ENCODE measurements at regions of chr1 and their contacts with region 1.

Region 1: GRCh38 chr1:28902738-28903137 is 11.6 kb upstream of the EPB41 start:
- DNase-seq: no peak
- H3K4me3 ChIP-seq: no peak overlapping the region
- H3K27ac ChIP-seq: no peak overlapping the region
- H3K4me1 ChIP-seq: peaks cover 13 to 17% of the 10 kb centered on the region in 2 experiments; a peak in 2 of 4 replicates
- H3K27me3 ChIP-seq: no peaks in the 10 kb centered on the region
- CTCF ChIP-seq: no peak
- EP300 ChIP-seq: no peak
- RAD21 ChIP-seq: no peak

Region 2: GRCh38 chr1:28914228-28915030 is 11.7 kb after region 1 on chr1 and contains the start of gene EPB41:
- CTCF ChIA-PET with region 1: interaction called, 6 read pairs
- POLR2A ChIA-PET with region 1: interaction called, 11 read pairs
- DNase-seq: peak; percentile 99
- H3K4me3 ChIP-seq: peak within 1 kb of the TSS; percentile 61 to 76
- H3K27ac ChIP-seq: peak within 1 kb of the TSS in 1 of 2 experiments; percentile 59; a peak in 2 of 4 replicates
- H3K4me1 ChIP-seq: peaks cover 0 to 15% of the 10 kb centered on the region in 2 experiments; a peak in 2 of 4 replicates
- H3K27me3 ChIP-seq: no peaks in the 10 kb centered on the region
- CTCF ChIP-seq: no peak
- EP300 ChIP-seq: no peak
- RAD21 ChIP-seq: no peak
- polyA plus RNA-seq, gene EPB41: 7.4 and 10.3 TPM in 2 replicates

Region 3: DNA sequence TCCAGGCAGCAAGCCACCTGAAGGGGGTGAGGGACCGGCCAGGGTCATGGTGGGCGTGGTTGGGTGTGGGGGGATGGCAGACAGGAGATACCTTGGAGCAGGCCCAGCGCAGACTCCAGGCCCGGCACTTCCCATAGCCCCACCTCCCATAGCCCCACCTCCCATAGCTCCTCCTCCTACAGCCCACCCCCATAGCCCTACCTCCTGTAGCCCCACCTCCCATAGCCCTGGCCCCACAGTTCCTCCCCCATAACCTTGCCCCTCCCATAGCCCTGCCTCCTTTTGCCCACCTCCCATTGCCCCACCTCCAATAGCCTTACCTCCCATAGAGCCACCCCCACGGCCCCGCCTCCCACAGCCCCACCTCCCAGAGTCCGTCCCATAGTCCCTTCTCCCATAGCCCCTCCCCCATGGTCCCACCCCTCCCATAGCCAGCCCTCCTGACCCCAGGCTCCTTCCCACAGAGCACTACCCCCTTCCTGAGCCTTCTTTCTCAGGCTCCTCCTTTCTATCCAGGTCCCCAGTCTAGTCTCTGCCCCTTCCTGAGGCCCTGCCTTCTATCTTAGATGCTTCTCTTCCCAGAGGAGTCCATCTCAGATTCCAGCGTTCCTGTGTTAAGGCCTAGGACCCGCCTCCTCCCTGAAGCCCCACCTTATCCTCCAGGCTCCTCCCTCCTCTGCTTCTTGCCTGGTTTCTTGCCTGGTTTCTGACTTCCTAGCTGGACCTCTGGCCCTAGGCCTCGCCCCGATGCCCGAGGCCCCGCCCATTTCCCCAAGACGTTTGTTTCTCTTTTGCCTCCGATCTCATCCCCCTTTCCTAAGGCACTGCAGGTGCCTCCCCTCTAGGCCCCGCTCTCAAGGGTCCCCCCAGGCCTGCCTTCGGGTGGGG is 380.4 kb after region 1 on chr1:
- CTCF ChIA-PET with region 1: no interaction called
- POLR2A ChIA-PET with region 1: no interaction called
- DNase-seq: peak; percentile 73
- H3K4me3 ChIP-seq: no peak overlapping the region
- H3K27ac ChIP-seq: no peak overlapping the region; a peak in 1 of 4 replicates
- H3K4me1 ChIP-seq: peaks cover 0 to 23% of the 10 kb centered on the region in 2 experiments; a peak in 2 of 4 replicates
- H3K27me3 ChIP-seq: no peaks in the 10 kb centered on the region
- CTCF ChIP-seq: no peak
- EP300 ChIP-seq: no peak
- RAD21 ChIP-seq: no peak